ENCODE measurements at regions of chr3 and their contacts with region 1.

Region 1: GRCh38 chr3:190384241-190384863 is 3.6 kb upstream of the CLDN16 start:
- DNase-seq: no peak
- H3K4me3 ChIP-seq: no peak overlapping the region
- H3K27ac ChIP-seq: no peak overlapping the region
- H3K4me1 ChIP-seq: peaks cover 0 to 38% (median 0%) of the 10 kb centered on the region in 3 donors
- H3K27me3 ChIP-seq: no peaks in the 10 kb centered on the region
- CTCF ChIP-seq: peak; percentile 31 to 88 (median 70)
- POLR2A ChIP-seq: no peak

Region 2: DNA sequence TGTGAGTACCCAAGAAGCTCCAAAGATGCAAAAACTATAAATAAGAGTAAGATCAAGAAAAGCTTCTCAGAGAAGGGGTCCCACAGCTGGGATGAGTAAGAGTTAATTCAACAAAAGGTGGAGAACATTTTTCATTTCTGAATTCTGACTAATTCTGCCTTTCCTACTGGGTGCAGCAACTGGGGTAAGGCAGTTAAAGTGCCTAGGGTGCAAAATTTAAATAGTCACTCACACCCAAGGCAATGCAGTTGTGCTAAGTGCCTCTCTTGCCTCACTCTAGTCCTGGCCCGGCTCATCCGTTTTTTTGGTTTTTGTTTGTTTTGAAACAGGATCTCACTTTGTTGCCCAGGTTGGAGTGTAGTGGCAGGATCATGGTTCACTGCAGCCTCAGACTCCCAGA is 512.9 kb before region 1 on chr3:
- intact Hi-C with region 1: no loop called
- DNase-seq: no peak
- H3K4me3 ChIP-seq: no peak overlapping the region
- H3K27ac ChIP-seq: no peak overlapping the region
- H3K4me1 ChIP-seq: no peaks in the 10 kb centered on the region
- H3K27me3 ChIP-seq: no peaks in the 10 kb centered on the region
- CTCF ChIP-seq: no peak
- POLR2A ChIP-seq: no peak

Region 3: DNA sequence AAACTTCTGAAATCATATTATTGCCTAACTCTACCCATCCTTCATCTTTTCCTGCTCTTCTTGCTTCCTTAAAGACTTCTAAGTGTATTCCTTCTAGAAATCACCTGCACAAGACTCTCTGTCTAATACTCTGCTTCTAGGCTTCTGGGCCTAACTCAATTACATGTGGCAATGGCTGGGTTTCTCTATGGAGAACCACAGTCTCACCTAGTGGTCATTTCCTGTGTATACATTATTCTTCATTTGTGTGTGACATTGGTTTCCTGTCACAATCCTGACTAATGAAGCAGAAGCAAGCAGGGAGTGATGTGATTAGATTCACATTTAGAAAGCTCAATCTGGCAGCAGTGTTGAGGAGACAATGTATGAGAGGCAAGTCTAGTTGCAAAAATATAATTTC is 45.2 kb before region 1 on chr3:
- intact Hi-C with region 1: loop called (anchors 10 kb)
- DNase-seq: no peak
- H3K4me3 ChIP-seq: no peak overlapping the region
- H3K27ac ChIP-seq: peak overlapping the region in 3 of 4 donors; percentile 33 to 81 (median 57)
- H3K4me1 ChIP-seq: peaks cover 8 to 32% (median 12%) of the 10 kb centered on the region in 3 donors
- H3K27me3 ChIP-seq: no peaks in the 10 kb centered on the region
- CTCF ChIP-seq: peak in 2 of 6 experiments; percentile 30 to 57
- POLR2A ChIP-seq: no peak

Measured in esophagus squamous epithelium (tissue), 5 donors.